Activated CD8-positive, alpha-beta T cell treated with anti-CD3 and anti-CD28 coated beads for 36 hours (primary cell): ENCODE measurements at regions of chr7 and their contacts with region 1.

Region 1: GRCh38 chr7:129218514-129219062 is 6.2 kb upstream of the AHCYL2 start:
- DNase-seq: peak; percentile 90
- ATAC-seq: peak; percentile 91
- H3K4me3 Mint-ChIP-seq: no peak overlapping the region
- H3K27ac Mint-ChIP-seq: no peak overlapping the region
- H3K4me1 Mint-ChIP-seq: peaks cover 7% of the 10 kb centered on the region
- H3K27me3 Mint-ChIP-seq: peaks cover 4% of the 10 kb centered on the region
- CTCF ChIP-seq: peak; percentile 94

Region 2: GRCh38 chr7:129101746-129102145 is 116.8 kb before region 1 on chr7:
- CTCF ChIA-PET with region 1: interaction called, 10 read pairs
- POLR2A ChIA-PET with region 1: no interaction called
- intact Hi-C with region 1: no loop called
- DNase-seq: no peak
- ATAC-seq: no peak
- H3K4me3 Mint-ChIP-seq: no peak overlapping the region
- H3K27ac Mint-ChIP-seq: no peak overlapping the region
- H3K4me1 Mint-ChIP-seq: no peaks in the 10 kb centered on the region
- H3K27me3 Mint-ChIP-seq: no peaks in the 10 kb centered on the region
- CTCF ChIP-seq: no peak

Region 3: DNA sequence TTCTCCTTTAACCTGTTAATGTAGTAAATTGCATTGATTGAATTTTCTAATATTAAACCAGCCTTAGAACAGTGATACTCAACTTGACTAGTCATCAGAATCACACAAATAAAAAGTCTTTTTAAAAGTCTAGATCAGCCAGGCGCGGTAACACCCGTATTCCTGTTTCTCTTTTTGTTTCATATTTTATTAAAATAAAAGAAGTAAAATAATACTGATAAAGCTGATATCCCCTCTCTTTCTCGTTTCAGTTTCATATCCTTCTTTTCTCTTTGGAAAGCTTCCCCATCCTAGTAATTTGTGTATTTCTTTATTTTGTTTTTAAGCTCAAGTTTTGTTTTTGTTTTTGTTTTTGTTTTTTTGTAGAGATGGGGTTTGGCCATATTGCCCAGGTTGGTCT is 20.8 kb before region 1 on chr7:
- CTCF ChIA-PET with region 1: interaction called, 18 read pairs
- POLR2A ChIA-PET with region 1: interaction called, 3 read pairs
- intact Hi-C with region 1: no loop called
- DNase-seq: no peak
- ATAC-seq: no peak
- H3K4me3 Mint-ChIP-seq: no peak overlapping the region
- H3K27ac Mint-ChIP-seq: no peak overlapping the region
- H3K4me1 Mint-ChIP-seq: no peaks in the 10 kb centered on the region
- H3K27me3 Mint-ChIP-seq: peaks cover 4% of the 10 kb centered on the region
- CTCF ChIP-seq: no peak

Region 4: GRCh38 chr7:129252128-129252527 is 33.5 kb after region 1 on chr7:
- CTCF ChIA-PET with region 1: interaction called, 21 read pairs
- POLR2A ChIA-PET with region 1: interaction called, 3 read pairs
- intact Hi-C with region 1: no loop called
- DNase-seq: no peak
- ATAC-seq: no peak
- H3K4me3 Mint-ChIP-seq: no peak overlapping the region
- H3K27ac Mint-ChIP-seq: no peak overlapping the region
- H3K4me1 Mint-ChIP-seq: peaks cover 3% of the 10 kb centered on the region
- H3K27me3 Mint-ChIP-seq: no peaks in the 10 kb centered on the region
- CTCF ChIP-seq: no peak

Region 5: GRCh38 chr7:129279762-129280161 is 61.2 kb after region 1 on chr7:
- CTCF ChIA-PET with region 1: interaction called, 320 read pairs
- POLR2A ChIA-PET with region 1: no interaction called
- intact Hi-C with region 1: no loop called
- DNase-seq: peak; percentile 10
- ATAC-seq: no peak
- H3K4me3 Mint-ChIP-seq: no peak overlapping the region
- H3K27ac Mint-ChIP-seq: no peak overlapping the region
- H3K4me1 Mint-ChIP-seq: peaks cover 5% of the 10 kb centered on the region
- H3K27me3 Mint-ChIP-seq: no peaks in the 10 kb centered on the region
- CTCF ChIP-seq: no peak

Region 6: GRCh38 chr7:129332284-129333035 is 113.9 kb after region 1 on chr7:
- CTCF ChIA-PET with region 1: interaction called, 10 read pairs
- POLR2A ChIA-PET with region 1: no interaction called
- intact Hi-C with region 1: no loop called
- DNase-seq: no peak
- ATAC-seq: no peak
- H3K4me3 Mint-ChIP-seq: no peak overlapping the region
- H3K27ac Mint-ChIP-seq: no peak overlapping the region
- H3K4me1 Mint-ChIP-seq: no peaks in the 10 kb centered on the region
- H3K27me3 Mint-ChIP-seq: no peaks in the 10 kb centered on the region
- CTCF ChIP-seq: no peak

Region 7: GRCh38 chr7:129376076-129376777 is 157.6 kb after region 1 on chr7:
- CTCF ChIA-PET with region 1: interaction called, 20 read pairs
- POLR2A ChIA-PET with region 1: no interaction called
- intact Hi-C with region 1: no loop called
- DNase-seq: peak; percentile 80
- ATAC-seq: peak; percentile 78
- H3K4me3 Mint-ChIP-seq: no peak overlapping the region
- H3K27ac Mint-ChIP-seq: no peak overlapping the region
- H3K4me1 Mint-ChIP-seq: peaks cover 22% of the 10 kb centered on the region
- H3K27me3 Mint-ChIP-seq: no peaks in the 10 kb centered on the region
- CTCF ChIP-seq: peak; percentile 73